Astrocyte of the cerebellum (primary cell): ENCODE measurements at regions of chr18 and their contacts with region 1.

Region 1: DNA sequence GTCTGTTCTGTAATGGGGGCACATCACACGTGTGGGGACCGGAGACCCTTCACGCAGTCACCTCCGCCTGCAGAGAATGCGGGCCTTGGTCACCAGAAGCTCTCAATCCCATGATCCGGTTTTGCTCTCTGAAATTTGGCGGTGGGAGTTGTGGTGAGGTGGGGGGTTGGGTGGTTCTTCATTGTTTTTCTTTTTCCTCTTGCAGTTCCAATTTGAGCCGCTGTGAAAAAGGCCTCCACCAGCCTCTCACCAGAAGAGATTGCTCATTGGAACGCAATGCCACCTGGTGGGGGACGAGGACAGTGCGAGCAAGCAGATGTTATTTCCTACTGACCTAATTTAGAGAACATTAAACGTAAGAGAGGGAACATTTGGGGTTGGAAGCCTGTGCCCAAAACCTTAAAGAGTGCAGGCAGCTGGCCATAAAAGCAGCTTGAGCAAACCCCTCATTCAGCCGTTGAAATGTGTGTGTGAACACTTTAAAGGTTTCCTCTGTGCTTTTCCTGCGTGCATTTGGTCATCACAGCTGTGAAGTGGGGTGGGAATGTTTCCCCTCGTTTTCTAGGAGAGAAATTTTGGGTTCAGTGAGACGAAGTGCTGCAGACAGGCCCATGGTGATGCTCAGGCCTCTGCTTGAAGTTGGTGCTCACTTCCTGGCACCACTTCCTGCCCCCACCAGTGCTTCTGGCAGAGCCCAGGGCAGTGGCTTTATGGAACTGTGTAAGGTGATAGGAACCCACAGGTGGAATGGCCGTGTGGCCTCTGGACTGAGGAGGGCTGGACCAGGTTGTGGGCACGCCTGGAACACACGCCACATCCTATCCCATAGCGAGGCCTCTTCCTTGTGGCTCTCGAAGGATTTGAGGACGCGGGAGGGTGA is 61.7 kb downstream of the ZCCHC2 start:
- DNase-seq: peak; percentile 88
- H3K4me3 ChIP-seq: no peak overlapping the region
- CTCF ChIP-seq: peak; percentile 99

Region 2: GRCh38 chr18:62186774-62187542 is 397.5 kb before region 1 on chr18 and contains the starts of genes PIGN and RELCH:
- in situ Hi-C with region 1: loop called (anchors 25 kb)
- DNase-seq: peak; percentile 98
- H3K4me3 ChIP-seq: peak within 1 kb of the TSS; percentile 99
- CTCF ChIP-seq: no peak

Region 3: DNA sequence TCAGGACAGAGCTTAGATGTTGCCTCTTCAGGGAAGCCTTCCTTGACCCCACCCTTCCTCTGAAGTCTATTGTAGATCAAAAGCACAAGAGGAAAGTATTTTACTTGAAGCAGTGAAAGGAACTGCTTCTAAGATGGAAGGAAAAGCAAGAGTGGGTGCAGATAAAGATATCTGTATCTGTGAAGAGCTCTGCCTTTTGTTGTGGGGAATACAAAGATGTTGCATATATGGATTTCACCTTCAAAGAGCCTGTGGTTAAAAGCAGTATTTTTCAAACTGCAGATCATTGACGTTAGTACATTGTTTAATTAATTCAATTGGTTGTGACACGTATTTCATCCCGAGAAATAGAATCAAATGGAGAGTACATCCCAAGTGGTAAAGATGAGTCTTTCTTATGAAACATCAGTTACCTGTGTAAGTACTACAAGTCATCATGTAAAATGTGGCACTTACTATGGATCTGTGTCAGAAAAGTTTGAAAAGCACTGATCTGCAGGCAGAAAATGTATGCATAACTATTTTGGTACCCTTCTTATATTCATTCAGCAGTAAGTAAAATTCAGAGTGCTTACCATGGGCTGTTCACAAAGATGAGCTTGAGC is 284.0 kb before region 1 on chr18:
- in situ Hi-C with region 1: no loop called
- DNase-seq: no peak
- H3K4me3 ChIP-seq: no peak overlapping the region
- CTCF ChIP-seq: no peak

Region 4: GRCh38 chr18:62522504-62523254 is 61.8 kb before region 1 on chr18 and contains the start of gene ZCCHC2:
- in situ Hi-C with region 1: no loop called
- DNase-seq: peak; percentile 89
- H3K4me3 ChIP-seq: peak within 1 kb of the TSS; percentile 76
- CTCF ChIP-seq: no peak

Region 5: DNA sequence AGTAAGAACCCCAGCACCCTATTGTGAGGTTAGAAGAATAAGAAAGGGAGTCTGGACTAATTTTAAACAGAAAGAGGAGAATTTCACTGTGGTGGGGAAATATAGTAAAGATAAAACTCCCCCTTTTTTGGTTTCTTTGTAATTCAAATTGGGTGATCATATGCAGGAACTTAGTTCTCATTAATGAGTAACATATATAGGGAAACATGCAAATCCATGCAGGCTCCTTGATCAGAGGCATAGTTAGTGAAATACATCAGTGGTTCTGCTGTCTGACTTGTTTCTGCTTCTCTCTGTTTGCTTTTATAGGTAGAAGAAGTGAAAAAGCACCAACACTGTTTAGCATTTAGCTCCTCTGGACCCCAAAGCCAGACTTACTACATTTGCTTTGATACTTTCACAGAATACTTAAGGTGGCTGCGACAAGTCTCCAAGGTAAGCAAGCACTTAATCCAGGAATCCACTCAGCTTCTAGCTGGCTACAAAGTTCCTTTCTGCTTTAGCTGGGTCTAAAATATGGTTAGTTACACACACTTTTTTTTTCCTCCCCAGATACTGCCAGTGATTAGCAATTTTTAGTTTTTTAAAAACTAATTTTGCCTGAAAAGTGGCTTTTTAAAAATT is 254.1 kb after region 1 on chr18:
- in situ Hi-C with region 1: no loop called
- DNase-seq: no peak
- H3K4me3 ChIP-seq: no peak overlapping the region
- CTCF ChIP-seq: no peak

Region 6: DNA sequence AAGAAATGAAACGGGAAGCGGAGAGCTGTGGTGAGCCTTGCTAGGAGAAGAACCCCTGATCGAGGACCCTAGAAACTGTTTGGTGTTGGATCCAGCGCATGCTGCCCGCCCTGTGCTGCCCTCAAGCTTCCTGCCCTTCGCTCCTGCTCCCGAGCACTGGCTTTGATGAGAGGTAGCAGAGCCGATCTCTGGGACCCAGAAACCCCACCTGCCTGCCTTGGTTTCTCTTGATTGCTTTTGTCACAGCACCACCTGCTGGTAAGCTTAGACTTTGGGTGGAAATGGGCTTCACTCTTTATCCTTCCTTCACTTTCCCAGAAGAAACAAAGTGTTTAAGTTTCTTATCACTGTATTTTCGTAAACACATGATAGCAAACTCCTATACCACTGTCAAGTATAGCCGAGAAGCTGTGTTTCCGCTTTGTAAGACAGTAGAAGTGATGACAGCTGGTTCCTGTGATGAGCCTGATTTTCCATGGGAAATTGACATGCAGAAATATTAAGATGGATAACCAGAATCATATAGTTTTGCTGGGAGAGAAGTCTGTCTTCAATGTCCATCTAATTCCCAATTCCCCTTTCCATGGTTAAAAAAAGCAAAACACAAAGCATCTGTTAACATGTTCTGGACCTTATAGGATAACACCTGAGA is 398.2 kb after region 1 on chr18:
- in situ Hi-C with region 1: loop called (anchors 25 kb)
- DNase-seq: peak; percentile 40
- H3K4me3 ChIP-seq: no peak overlapping the region
- CTCF ChIP-seq: peak; percentile 81